PC-3 (cell line): ENCODE measurements at regions of chr2 and their contacts with region 1.

Region 1: DNA sequence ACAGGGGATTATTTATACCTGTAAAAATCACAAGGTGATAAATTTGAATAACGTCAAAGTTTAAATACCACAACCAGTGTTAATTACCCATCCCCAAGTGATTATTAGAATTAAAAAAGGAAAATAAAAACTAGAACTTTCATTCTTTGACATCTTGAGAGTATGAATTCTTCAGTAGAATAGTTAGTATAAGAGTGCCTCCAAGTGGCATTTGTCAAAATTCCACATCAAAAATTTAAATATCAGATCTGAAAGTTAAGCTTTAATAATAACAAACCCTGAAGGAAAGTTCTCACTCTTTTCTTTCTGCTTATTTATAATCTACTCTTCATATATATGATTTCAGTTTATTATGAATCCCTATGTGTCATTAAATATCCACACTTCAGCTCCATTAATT is 273.7 kb upstream of the KYNU start:
- DNase-seq: peak; percentile 59
- ATAC-seq: no peak
- H3K4me3 ChIP-seq: no peak overlapping the region
- H3K27ac ChIP-seq: no peak overlapping the region
- H3K4me1 ChIP-seq: peaks cover 26% of the 10 kb centered on the region
- H3K27me3 ChIP-seq: no peaks in the 10 kb centered on the region
- CTCF ChIP-seq: peak; percentile 71

Region 2: DNA sequence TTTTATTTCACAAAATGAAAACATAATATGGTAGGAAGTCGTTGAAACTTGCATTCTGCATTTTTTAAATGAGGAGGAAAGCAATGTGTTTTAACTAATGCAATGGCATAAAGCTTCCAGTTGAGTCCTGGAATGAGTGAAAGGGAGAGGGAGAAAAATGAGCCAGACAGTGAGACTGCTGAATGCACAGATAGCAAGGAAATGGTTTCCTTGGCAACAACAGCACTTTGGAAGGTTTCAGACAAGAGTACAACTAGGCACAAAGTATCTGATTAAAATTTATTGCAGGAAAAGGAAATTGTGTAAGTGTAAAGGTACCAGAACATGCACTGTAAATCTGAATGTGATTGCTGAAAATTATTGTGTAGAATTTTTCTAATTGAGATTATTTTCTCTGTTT is 46.4 kb before region 1 on chr2:
- CTCF ChIA-PET with region 1: no interaction called
- POLR2A ChIA-PET with region 1: no interaction called
- intact Hi-C with region 1: no loop called
- DNase-seq: no peak
- ATAC-seq: no peak
- H3K4me3 ChIP-seq: no peak overlapping the region
- H3K27ac ChIP-seq: no peak overlapping the region
- H3K4me1 ChIP-seq: no peaks in the 10 kb centered on the region
- H3K27me3 ChIP-seq: 0 out of 2 replicates have a peak, but pooled peaks cover 2% of the 10 kb centered on the region
- CTCF ChIP-seq: no peak

Region 3: GRCh38 chr2:142642654-142643053 is 38.9 kb after region 1 on chr2:
- CTCF ChIA-PET with region 1: no interaction called
- POLR2A ChIA-PET with region 1: no interaction called
- intact Hi-C with region 1: loop called (anchors 2 kb)
- DNase-seq: peak; percentile 38
- ATAC-seq: 0 out of 2 replicates have a peak, but pooled peaks have one; percentile 20
- H3K4me3 ChIP-seq: no peak overlapping the region
- H3K27ac ChIP-seq: no peak overlapping the region
- H3K4me1 ChIP-seq: peaks cover 3% of the 10 kb centered on the region; the same call in 1 of the 2 replicates
- H3K27me3 ChIP-seq: no peaks in the 10 kb centered on the region
- CTCF ChIP-seq: no peak